MCF 10A (cell line): ENCODE measurements at regions of chr11 and their contacts with region 1.

Region 1: DNA sequence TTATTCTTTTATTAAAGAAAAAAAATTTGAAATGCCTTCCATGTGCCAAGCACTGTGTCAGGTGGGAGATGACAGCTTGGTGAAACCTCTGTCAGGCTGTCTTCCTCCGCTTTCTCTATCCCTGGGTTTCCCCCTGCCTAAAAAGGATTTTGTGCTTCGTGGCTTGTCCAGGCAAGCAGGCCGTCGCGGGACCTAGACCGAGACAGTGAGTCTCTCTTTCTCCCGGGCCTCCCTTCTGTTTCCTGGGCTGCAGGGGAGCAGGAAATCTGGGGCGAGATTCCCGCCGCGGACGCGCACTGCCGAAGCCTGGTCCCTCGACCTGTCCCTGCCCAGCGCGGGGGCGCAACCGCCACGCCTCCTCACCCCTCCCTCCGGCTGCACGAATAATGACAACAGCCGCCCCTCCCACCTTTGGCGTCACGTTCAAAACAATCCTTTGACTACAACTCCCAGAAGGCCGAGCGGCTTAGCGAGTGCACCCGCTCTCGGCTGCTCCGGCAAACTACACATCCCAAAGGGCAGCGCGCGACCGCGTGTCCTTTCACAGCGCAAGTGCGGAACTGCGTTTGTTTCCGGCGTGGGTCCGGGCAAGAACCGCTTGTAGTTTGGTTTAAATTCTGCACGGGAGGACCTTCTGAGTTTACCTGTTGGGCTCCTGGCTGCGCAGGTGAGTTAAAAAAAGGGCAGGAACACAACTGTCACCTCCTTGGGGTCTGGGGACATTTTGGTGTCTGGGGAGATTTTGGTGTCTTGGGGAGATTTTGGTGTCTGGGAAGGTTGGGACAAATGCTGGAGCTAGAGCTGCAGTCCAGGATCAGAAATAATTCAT is at the start of gene CLP1:
- DNase-seq: peak; percentile 99
- H3K4me3 Mint-ChIP-seq: peak within 1 kb of the TSS; percentile 100
- H3K27ac Mint-ChIP-seq: peak within 1 kb of the TSS; percentile 97
- H3K4me1 Mint-ChIP-seq: peaks cover 13% of the 10 kb centered on the region
- H3K27me3 Mint-ChIP-seq: no peaks in the 10 kb centered on the region
- CTCF ChIP-seq: no peak
- total RNA-seq, gene CLP1: 8.6 and 9.2 TPM in 2 replicates

Region 2: GRCh38 chr11:57547854-57548377 is 109.5 kb before region 1 on chr11:
- CTCF ChIA-PET with region 1: no interaction called
- POLR2A ChIA-PET with region 1: no interaction called
- intact Hi-C with region 1: no loop called
- DNase-seq: no peak
- H3K4me3 Mint-ChIP-seq: no peak overlapping the region
- H3K27ac Mint-ChIP-seq: no peak overlapping the region
- H3K4me1 Mint-ChIP-seq: peaks cover 7% of the 10 kb centered on the region
- H3K27me3 Mint-ChIP-seq: peaks cover 11% of the 10 kb centered on the region
- CTCF ChIP-seq: no peak

Region 3: GRCh38 chr11:57585301-57585700 is 72.1 kb before region 1 on chr11:
- CTCF ChIA-PET with region 1: no interaction called
- POLR2A ChIA-PET with region 1: no interaction called
- intact Hi-C with region 1: no loop called
- DNase-seq: no peak
- H3K4me3 Mint-ChIP-seq: no peak overlapping the region
- H3K27ac Mint-ChIP-seq: no peak overlapping the region
- H3K4me1 Mint-ChIP-seq: no peaks in the 10 kb centered on the region
- H3K27me3 Mint-ChIP-seq: no peaks in the 10 kb centered on the region
- CTCF ChIP-seq: no peak

Region 4: DNA sequence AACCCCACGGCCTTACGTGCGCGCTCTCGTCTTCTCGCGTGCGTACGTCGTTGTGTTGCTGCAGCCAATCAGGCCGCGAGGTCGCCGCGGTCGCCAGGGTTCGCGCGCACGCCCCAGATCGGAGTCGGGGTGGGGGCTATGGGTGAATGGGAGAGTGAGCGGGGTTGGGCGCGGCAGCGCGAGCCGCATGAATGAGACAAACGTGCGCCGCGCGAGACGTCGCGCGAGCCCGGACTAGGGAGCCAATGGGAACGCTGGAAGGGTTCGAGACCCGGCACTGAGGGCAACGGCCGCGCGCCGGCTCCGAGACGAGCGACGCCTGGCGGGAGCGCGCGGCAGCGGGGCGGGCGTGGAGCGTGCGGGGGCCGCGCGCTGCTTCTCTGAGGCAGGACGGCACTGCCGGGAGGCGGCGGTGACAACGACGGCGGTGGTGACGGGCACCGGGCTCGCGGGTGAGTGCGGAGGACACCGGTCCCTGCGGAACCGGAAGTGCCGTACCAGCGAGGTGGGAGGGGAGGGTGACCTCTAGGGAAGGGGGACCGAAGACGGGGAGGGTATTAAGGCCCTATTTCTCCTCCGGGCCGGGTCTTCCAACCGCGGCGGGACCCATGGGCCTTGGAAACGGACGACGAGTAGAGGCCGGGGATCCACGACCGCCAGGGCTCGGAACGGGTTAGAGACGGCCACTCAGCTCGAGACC is 10.5 kb after region 1 on chr11 and contains the start of gene ZDHHC5:
- CTCF ChIA-PET with region 1: interaction called, 4 read pairs
- POLR2A ChIA-PET with region 1: interaction called, 36 read pairs
- intact Hi-C with region 1: loop called (anchors 1 kb)
- DNase-seq: peak; percentile 99
- H3K4me3 Mint-ChIP-seq: peak within 1 kb of the TSS; percentile 96
- H3K27ac Mint-ChIP-seq: peak within 1 kb of the TSS; percentile 100
- H3K4me1 Mint-ChIP-seq: peaks cover 18% of the 10 kb centered on the region
- H3K27me3 Mint-ChIP-seq: no peaks in the 10 kb centered on the region
- CTCF ChIP-seq: peak; percentile 44
- total RNA-seq, gene ZDHHC5: 73.8 and 74.6 TPM in 2 replicates

Region 5: DNA sequence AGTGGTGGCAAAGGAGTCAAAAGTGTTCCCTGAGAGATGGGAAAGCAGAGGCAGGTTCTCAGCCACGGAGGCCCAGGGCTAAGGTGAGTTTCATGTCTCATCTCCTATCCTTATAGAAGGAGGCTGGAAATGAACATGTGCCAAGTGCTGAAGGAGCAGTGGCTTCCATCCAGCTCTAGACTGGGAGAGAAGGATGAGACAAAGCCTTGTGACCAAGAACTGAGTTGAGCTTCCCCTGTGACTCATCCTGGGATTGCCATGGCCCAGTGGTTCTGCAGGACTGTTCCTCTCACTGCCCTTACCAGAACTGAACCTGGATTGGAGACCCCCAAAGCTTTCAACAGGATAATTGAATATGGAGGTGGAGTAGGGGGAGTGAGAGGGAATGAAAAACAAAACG is 349.5 kb after region 1 on chr11:
- CTCF ChIA-PET with region 1: no interaction called
- POLR2A ChIA-PET with region 1: no interaction called
- intact Hi-C with region 1: no loop called
- DNase-seq: peak; percentile 51
- H3K4me3 Mint-ChIP-seq: no peak overlapping the region
- H3K27ac Mint-ChIP-seq: no peak overlapping the region
- H3K4me1 Mint-ChIP-seq: peaks cover 12% of the 10 kb centered on the region
- H3K27me3 Mint-ChIP-seq: no peaks in the 10 kb centered on the region
- CTCF ChIP-seq: no peak